CD8-positive, alpha-beta T cell (primary cell): ENCODE measurements at regions of chr5 and their contacts with region 1.

Region 1: DNA sequence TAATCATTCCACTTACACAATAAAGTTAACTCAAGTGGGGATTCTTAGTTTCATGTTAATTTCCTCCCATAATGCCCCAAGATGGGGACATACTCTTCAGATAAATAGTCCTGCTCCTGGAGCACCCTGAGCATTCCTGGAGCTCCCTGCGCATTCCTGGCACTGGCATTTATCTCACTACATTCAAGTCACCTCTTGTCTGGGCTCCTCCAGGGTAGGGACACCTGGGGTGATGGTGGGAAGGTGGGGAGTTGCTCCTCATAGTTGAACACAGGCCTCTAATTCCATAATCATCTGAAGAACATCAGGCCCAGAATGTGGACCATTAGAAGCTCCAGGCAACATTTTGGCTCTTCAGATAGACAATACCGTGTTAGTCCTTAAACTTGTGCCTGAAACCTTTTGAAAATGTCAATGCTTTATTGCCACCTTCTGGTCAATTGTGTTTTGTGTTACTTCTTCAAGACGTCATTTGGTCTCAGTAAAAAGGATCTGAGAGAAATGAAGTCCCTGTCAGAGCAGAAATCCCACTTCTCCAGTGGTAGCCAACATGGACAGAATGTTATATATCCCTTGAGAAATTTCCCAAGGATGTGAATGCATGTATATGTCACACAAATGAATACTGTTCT is 14.2 kb upstream of the AGGF1 start:
- DNase-seq: peak in 2 of 9 experiments; percentile 10 to 30
- ATAC-seq: no peak
- H3K4me3 ChIP-seq: no peak overlapping the region
- H3K4me3 Mint-ChIP-seq: no peak overlapping the region
- H3K27ac ChIP-seq: no peak overlapping the region
- H3K27ac Mint-ChIP-seq: no peak overlapping the region
- H3K4me1 ChIP-seq: no peaks in the 10 kb centered on the region
- H3K4me1 Mint-ChIP-seq: no peaks in the 10 kb centered on the region
- H3K27me3 ChIP-seq: peaks cover 0 to under 1% of the 10 kb centered on the region in 2 experiments
- H3K27me3 Mint-ChIP-seq: peaks cover 23% of the 10 kb centered on the region
- CTCF ChIP-seq: peak; percentile 18

Region 2: GRCh38 chr5:76594107-76594506 is 421.9 kb before region 1 on chr5:
- CTCF ChIA-PET with region 1: no interaction called
- POLR2A ChIA-PET with region 1: no interaction called
- intact Hi-C with region 1: no loop called
- DNase-seq: no peak
- ATAC-seq: no peak
- H3K4me3 ChIP-seq: no peak overlapping the region
- H3K4me3 Mint-ChIP-seq: no peak overlapping the region
- H3K27ac ChIP-seq: no peak overlapping the region
- H3K27ac Mint-ChIP-seq: no peak overlapping the region
- H3K4me1 ChIP-seq: no peaks in the 10 kb centered on the region
- H3K4me1 Mint-ChIP-seq: no peaks in the 10 kb centered on the region
- H3K27me3 ChIP-seq: no peaks in the 10 kb centered on the region
- H3K27me3 Mint-ChIP-seq: no peaks in the 10 kb centered on the region
- CTCF ChIP-seq: no peak

Region 3: GRCh38 chr5:76617675-76618074 is 398.4 kb before region 1 on chr5:
- CTCF ChIA-PET with region 1: no interaction called
- POLR2A ChIA-PET with region 1: no interaction called
- intact Hi-C with region 1: no loop called
- DNase-seq: no peak
- ATAC-seq: no peak
- H3K4me3 ChIP-seq: no peak overlapping the region
- H3K4me3 Mint-ChIP-seq: no peak overlapping the region
- H3K27ac ChIP-seq: no peak overlapping the region
- H3K27ac Mint-ChIP-seq: no peak overlapping the region
- H3K4me1 ChIP-seq: no peaks in the 10 kb centered on the region
- H3K4me1 Mint-ChIP-seq: no peaks in the 10 kb centered on the region
- H3K27me3 ChIP-seq: no peaks in the 10 kb centered on the region
- H3K27me3 Mint-ChIP-seq: no peaks in the 10 kb centered on the region
- CTCF ChIP-seq: no peak

Region 4: DNA sequence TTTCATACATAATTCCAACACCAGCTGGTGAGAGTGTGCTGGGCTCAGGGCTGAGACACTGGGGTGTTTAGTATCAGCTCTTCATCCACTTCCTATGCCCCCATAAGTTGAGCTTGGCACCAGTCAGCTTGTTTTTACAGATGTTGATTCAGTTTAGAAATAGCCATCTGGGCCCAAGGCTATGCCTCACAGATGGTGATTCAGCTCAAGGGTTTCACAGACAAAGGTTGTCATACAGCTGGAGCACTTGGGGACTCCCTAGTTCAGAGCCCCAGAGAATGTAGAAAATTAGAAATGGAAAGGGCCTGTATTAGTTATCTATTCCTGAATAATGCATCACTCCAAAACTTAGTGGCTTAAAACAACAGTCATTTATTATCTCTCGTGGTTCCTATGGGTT is 73.5 kb before region 1 on chr5:
- CTCF ChIA-PET with region 1: no interaction called
- POLR2A ChIA-PET with region 1: no interaction called
- intact Hi-C with region 1: no loop called
- DNase-seq: no peak
- ATAC-seq: no peak
- H3K4me3 ChIP-seq: no peak overlapping the region
- H3K4me3 Mint-ChIP-seq: no peak overlapping the region
- H3K27ac ChIP-seq: no peak overlapping the region
- H3K27ac Mint-ChIP-seq: no peak overlapping the region
- H3K4me1 ChIP-seq: no peaks in the 10 kb centered on the region
- H3K4me1 Mint-ChIP-seq: no peaks in the 10 kb centered on the region
- H3K27me3 ChIP-seq: no peaks in the 10 kb centered on the region
- H3K27me3 Mint-ChIP-seq: peaks cover 14% of the 10 kb centered on the region
- CTCF ChIP-seq: no peak

Region 5: GRCh38 chr5:77337686-77338085 is 321.6 kb after region 1 on chr5:
- CTCF ChIA-PET with region 1: no interaction called
- POLR2A ChIA-PET with region 1: no interaction called
- intact Hi-C with region 1: no loop called
- DNase-seq: no peak
- ATAC-seq: no peak
- H3K4me3 ChIP-seq: no peak overlapping the region
- H3K4me3 Mint-ChIP-seq: no peak overlapping the region
- H3K27ac ChIP-seq: no peak overlapping the region
- H3K27ac Mint-ChIP-seq: no peak overlapping the region
- H3K4me1 ChIP-seq: no peaks in the 10 kb centered on the region
- H3K4me1 Mint-ChIP-seq: no peaks in the 10 kb centered on the region
- H3K27me3 ChIP-seq: no peaks in the 10 kb centered on the region
- H3K27me3 Mint-ChIP-seq: no peaks in the 10 kb centered on the region
- CTCF ChIP-seq: no peak

Region 6: DNA sequence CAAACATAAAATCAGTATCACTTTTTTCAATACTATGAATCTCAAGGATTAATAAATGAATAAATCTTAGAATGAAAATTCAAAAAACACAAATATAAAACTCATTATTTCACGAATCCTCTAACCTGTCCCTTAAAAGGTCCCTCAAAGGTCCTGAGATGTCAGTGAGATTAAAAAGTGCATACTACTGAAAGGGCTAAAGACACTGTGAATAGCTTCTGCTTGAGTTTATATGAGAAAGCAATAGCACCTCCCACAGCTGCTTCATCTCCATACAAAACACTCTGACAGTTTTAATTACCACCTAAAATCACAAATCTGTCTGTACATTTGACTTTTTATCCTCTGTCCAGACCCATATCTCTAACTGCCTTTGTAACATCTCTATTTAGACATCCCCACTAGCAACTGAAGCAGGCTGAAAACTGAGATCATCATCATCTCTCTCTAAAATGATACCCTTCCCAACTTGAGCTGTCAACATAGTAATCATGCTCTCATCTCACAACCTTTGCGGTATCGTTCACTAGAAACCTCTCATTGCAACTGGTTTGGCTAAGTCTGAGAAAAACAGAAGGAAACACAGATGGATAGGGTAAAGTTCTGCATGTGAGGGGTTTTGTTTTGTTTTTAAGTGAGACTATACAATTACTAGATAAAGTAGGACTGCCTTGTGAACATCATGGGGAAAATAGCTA is 703.8 kb after region 1 on chr5:
- CTCF ChIA-PET with region 1: no interaction called
- POLR2A ChIA-PET with region 1: no interaction called
- intact Hi-C with region 1: loop called in 1 of 2 experiments (anchors 5 kb)
- DNase-seq: no peak
- ATAC-seq: no peak
- H3K4me3 ChIP-seq: no peak overlapping the region
- H3K4me3 Mint-ChIP-seq: no peak overlapping the region
- H3K27ac ChIP-seq: no peak overlapping the region
- H3K27ac Mint-ChIP-seq: peak overlapping the region; percentile 37
- H3K4me1 ChIP-seq: no peaks in the 10 kb centered on the region
- H3K4me1 Mint-ChIP-seq: peaks cover 50% of the 10 kb centered on the region
- H3K27me3 ChIP-seq: no peaks in the 10 kb centered on the region
- H3K27me3 Mint-ChIP-seq: no peaks in the 10 kb centered on the region
- CTCF ChIP-seq: no peak